CD8-positive, alpha-beta T cell (primary cell): ENCODE measurements at regions of chr16 and their contacts with region 1.

Region 1: GRCh38 chr16:24539291-24539849 is at the start of gene RBBP6:
- DNase-seq: peak; percentile 84 to 98 (median 92)
- ATAC-seq: peak; percentile 85
- H3K4me3 ChIP-seq: peak within 1 kb of the TSS; percentile 74 to 89
- H3K4me3 Mint-ChIP-seq: peak within 1 kb of the TSS; percentile 94
- H3K27ac ChIP-seq: peak within 1 kb of the TSS; percentile 96 to 99
- H3K27ac Mint-ChIP-seq: peak within 1 kb of the TSS; percentile 100
- H3K4me1 ChIP-seq: peaks cover 29% of the 10 kb centered on the region
- H3K4me1 Mint-ChIP-seq: peaks cover 38% of the 10 kb centered on the region
- H3K27me3 ChIP-seq: no peaks in the 10 kb centered on the region
- H3K27me3 Mint-ChIP-seq: no peaks in the 10 kb centered on the region
- CTCF ChIP-seq: peak; percentile 24
- total RNA-seq, gene RBBP6: 172 to 177 TPM

Region 2: GRCh38 chr16:23149349-23149996 is 1389.9 kb before region 1 on chr16 and contains the start of gene USP31:
- CTCF ChIA-PET with region 1: no interaction called
- POLR2A ChIA-PET with region 1: interaction called, 3 read pairs
- intact Hi-C with region 1: loop called in 1 of 2 experiments (anchors 5 kb)
- DNase-seq: peak; percentile 76 to 95 (median 87)
- ATAC-seq: peak; percentile 95
- H3K4me3 ChIP-seq: peak within 1 kb of the TSS; percentile 64 to 78
- H3K4me3 Mint-ChIP-seq: peak within 1 kb of the TSS; percentile 94
- H3K27ac ChIP-seq: peak within 1 kb of the TSS; percentile 17 to 37
- H3K27ac Mint-ChIP-seq: peak within 1 kb of the TSS; percentile 64
- H3K4me1 ChIP-seq: peaks cover 10% of the 10 kb centered on the region
- H3K4me1 Mint-ChIP-seq: peaks cover 20% of the 10 kb centered on the region
- H3K27me3 ChIP-seq: no peaks in the 10 kb centered on the region
- H3K27me3 Mint-ChIP-seq: peaks cover 5% of the 10 kb centered on the region
- CTCF ChIP-seq: no peak
- total RNA-seq, gene USP31: 1.6 to 1.8 TPM

Region 3: DNA sequence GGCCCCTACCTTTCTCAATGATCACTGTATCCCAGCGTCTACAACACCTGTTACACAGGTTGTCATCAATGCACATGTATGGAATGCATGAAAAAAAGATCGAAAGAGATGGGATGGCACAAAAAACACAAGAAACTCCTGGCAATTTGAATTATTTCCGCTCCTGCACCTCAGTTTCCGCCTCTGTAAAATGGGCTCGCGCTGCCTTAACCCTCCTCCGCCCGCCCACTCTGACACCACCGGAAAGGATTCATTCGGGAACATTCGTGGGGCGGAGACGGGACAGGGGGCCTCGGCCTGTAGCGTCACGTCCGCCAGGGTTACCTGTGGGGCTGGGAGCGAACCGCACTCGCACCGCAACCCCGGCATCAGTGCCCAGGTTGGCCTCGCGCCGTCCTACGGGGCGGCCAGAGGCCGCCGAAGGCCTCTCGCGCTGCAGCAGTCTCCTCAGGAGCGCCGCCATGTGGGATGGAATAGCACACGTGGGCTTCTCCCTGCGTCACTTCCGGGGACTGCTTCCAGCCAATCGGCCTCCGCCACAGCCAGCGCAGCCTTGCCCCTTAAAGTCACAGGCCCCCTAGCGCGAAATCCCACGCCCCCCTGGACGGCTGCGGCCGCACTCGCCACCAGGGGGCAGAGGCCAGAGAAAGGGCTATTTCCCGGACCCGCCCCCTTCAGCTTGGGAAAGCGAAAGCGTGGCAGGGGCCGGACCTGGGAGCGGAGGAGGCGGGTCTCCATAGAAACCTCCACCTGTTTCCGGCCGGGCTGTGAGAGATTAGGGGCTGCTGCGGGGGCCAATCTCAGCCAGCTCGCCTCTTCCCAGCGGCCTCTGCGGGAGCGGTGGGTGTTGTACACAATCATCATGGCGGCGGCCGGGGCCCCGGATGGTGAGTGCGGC is 982.2 kb before region 1 on chr16 and contains the starts of genes EARS2 and UBFD1:
- CTCF ChIA-PET with region 1: no interaction called
- POLR2A ChIA-PET with region 1: no interaction called
- intact Hi-C with region 1: loop called in 1 of 2 experiments (anchors 2 kb)
- DNase-seq: peak; percentile 90 to 98 (median 95)
- ATAC-seq: peak; percentile 90
- H3K4me3 ChIP-seq: peak within 1 kb of the TSS; percentile 82 to 90
- H3K4me3 Mint-ChIP-seq: peak within 1 kb of the TSS; percentile 91
- H3K27ac ChIP-seq: peak within 1 kb of the TSS; percentile 88 to 92
- H3K27ac Mint-ChIP-seq: peak within 1 kb of the TSS; percentile 92
- H3K4me1 ChIP-seq: peaks cover 21% of the 10 kb centered on the region
- H3K4me1 Mint-ChIP-seq: peaks cover 38% of the 10 kb centered on the region
- H3K27me3 ChIP-seq: no peaks in the 10 kb centered on the region
- H3K27me3 Mint-ChIP-seq: no peaks in the 10 kb centered on the region
- CTCF ChIP-seq: peak; percentile 48
- total RNA-seq, gene EARS2: 7.2 to 8.8 TPM
- total RNA-seq, gene UBFD1: 49.0 to 51.1 TPM

Region 4: GRCh38 chr16:23835390-23836077 is 703.8 kb before region 1 on chr16 and contains the start of gene PRKCB:
- CTCF ChIA-PET with region 1: no interaction called
- POLR2A ChIA-PET with region 1: no interaction called
- intact Hi-C with region 1: loop called in 1 of 2 experiments (anchors 10 kb)
- DNase-seq: peak; percentile 80 to 94 (median 88)
- ATAC-seq: peak; percentile 88
- H3K4me3 ChIP-seq: peak within 1 kb of the TSS; percentile 71 to 93
- H3K4me3 Mint-ChIP-seq: peak within 1 kb of the TSS; percentile 99
- H3K27ac ChIP-seq: peak within 1 kb of the TSS; percentile 40 to 44
- H3K27ac Mint-ChIP-seq: peak within 1 kb of the TSS; percentile 95
- H3K4me1 ChIP-seq: peaks cover 48% of the 10 kb centered on the region
- H3K4me1 Mint-ChIP-seq: peaks cover 55% of the 10 kb centered on the region
- H3K27me3 ChIP-seq: no peaks in the 10 kb centered on the region
- H3K27me3 Mint-ChIP-seq: no peaks in the 10 kb centered on the region
- CTCF ChIP-seq: no peak
- total RNA-seq, gene PRKCB: 62.8 to 64.4 TPM

Region 5: GRCh38 chr16:24552705-24553246 is 13.4 kb after region 1 on chr16:
- CTCF ChIA-PET with region 1: interaction called, 3 read pairs
- POLR2A ChIA-PET with region 1: interaction called, 15 read pairs
- intact Hi-C with region 1: loop called in 1 of 2 experiments (anchors 1 kb)
- DNase-seq: no peak
- ATAC-seq: no peak
- H3K4me3 ChIP-seq: no peak overlapping the region
- H3K4me3 Mint-ChIP-seq: no peak overlapping the region
- H3K27ac ChIP-seq: no peak overlapping the region
- H3K27ac Mint-ChIP-seq: peak overlapping the region; percentile 49
- H3K4me1 ChIP-seq: peaks cover 12% of the 10 kb centered on the region
- H3K4me1 Mint-ChIP-seq: peaks cover 46% of the 10 kb centered on the region
- H3K27me3 ChIP-seq: no peaks in the 10 kb centered on the region
- H3K27me3 Mint-ChIP-seq: no peaks in the 10 kb centered on the region
- CTCF ChIP-seq: no peak

Region 6: GRCh38 chr16:25014500-25015147 is 475.3 kb after region 1 on chr16:
- CTCF ChIA-PET with region 1: no interaction called
- POLR2A ChIA-PET with region 1: no interaction called
- intact Hi-C with region 1: loop called in 1 of 2 experiments (anchors 10 kb)
- DNase-seq: peak in 6 of 9 experiments; percentile 19 to 55 (median 31)
- ATAC-seq: peak; percentile 41
- H3K4me3 ChIP-seq: peak overlapping the region; percentile 65 to 73
- H3K4me3 Mint-ChIP-seq: peak overlapping the region; percentile 93
- H3K27ac ChIP-seq: peak overlapping the region; percentile 75 to 83
- H3K27ac Mint-ChIP-seq: peak overlapping the region; percentile 96
- H3K4me1 ChIP-seq: peaks cover 51% of the 10 kb centered on the region
- H3K4me1 Mint-ChIP-seq: peaks cover 70% of the 10 kb centered on the region
- H3K27me3 ChIP-seq: no peaks in the 10 kb centered on the region
- H3K27me3 Mint-ChIP-seq: no peaks in the 10 kb centered on the region
- CTCF ChIP-seq: no peak

Region 7: GRCh38 chr16:25111403-25112166 is 572.2 kb after region 1 on chr16 and contains the start of gene LCMT1:
- CTCF ChIA-PET with region 1: no interaction called
- POLR2A ChIA-PET with region 1: no interaction called
- intact Hi-C with region 1: loop called in 1 of 2 experiments (anchors 2 kb)
- DNase-seq: peak; percentile 79 to 97 (median 89)
- ATAC-seq: peak; percentile 89
- H3K4me3 ChIP-seq: peak within 1 kb of the TSS; percentile 85 to 90
- H3K4me3 Mint-ChIP-seq: peak within 1 kb of the TSS; percentile 95
- H3K27ac ChIP-seq: peak within 1 kb of the TSS; percentile 62 to 70
- H3K27ac Mint-ChIP-seq: peak within 1 kb of the TSS; percentile 93
- H3K4me1 ChIP-seq: peaks cover 29% of the 10 kb centered on the region
- H3K4me1 Mint-ChIP-seq: peaks cover 68% of the 10 kb centered on the region
- H3K27me3 ChIP-seq: no peaks in the 10 kb centered on the region
- H3K27me3 Mint-ChIP-seq: no peaks in the 10 kb centered on the region
- CTCF ChIP-seq: no peak
- total RNA-seq, gene LCMT1: 20.9 to 28.6 TPM